Activated CD8-positive, alpha-beta T cell treated with anti-CD3 and anti-CD28 coated beads for 36 hours (primary cell): ENCODE measurements at regions of chr22 and their contacts with region 1.

Region 1: DNA sequence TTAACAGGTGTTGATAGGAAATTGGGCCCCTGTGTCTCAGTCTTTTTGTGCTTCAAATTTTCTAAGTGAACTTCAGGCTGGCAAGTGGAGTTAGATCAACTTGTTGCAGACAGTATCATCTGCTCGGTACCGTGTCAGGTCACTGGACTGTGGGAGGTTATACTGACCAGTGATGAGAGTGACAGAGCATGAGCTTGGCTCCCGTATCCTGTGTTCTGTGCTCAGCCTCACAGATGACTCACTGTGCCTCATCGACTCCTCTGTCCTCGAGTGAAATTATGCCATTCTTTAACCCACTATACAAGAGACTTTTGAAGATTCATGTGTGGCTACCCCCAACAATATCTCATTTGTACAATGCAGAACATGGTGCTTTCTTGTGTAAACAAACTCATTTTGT is 7.9 kb downstream of the GRAP2 start:
- DNase-seq: peak; percentile 66
- ATAC-seq: peak; percentile 55
- H3K4me3 Mint-ChIP-seq: peak overlapping the region; percentile 80
- H3K27ac Mint-ChIP-seq: peak overlapping the region; percentile 92
- H3K4me1 Mint-ChIP-seq: peaks cover 61% of the 10 kb centered on the region
- H3K27me3 Mint-ChIP-seq: no peaks in the 10 kb centered on the region
- CTCF ChIP-seq: no peak

Region 2: GRCh38 chr22:39932918-39933649 is 24.3 kb after region 1 on chr22:
- CTCF ChIA-PET with region 1: interaction called, 130 read pairs
- POLR2A ChIA-PET with region 1: interaction called, 270 read pairs
- intact Hi-C with region 1: no loop called
- DNase-seq: peak; percentile 81
- ATAC-seq: peak; percentile 67
- H3K4me3 Mint-ChIP-seq: peak overlapping the region; percentile 72
- H3K27ac Mint-ChIP-seq: peak overlapping the region; percentile 90
- H3K4me1 Mint-ChIP-seq: peaks cover 50% of the 10 kb centered on the region
- H3K27me3 Mint-ChIP-seq: no peaks in the 10 kb centered on the region
- CTCF ChIP-seq: peak; percentile 92

Region 3: GRCh38 chr22:40076702-40077645 is 168.2 kb after region 1 on chr22:
- CTCF ChIA-PET with region 1: no interaction called
- POLR2A ChIA-PET with region 1: no interaction called
- intact Hi-C with region 1: no loop called
- DNase-seq: no peak
- ATAC-seq: peak; percentile 57
- H3K4me3 Mint-ChIP-seq: peak overlapping the region; percentile 73
- H3K27ac Mint-ChIP-seq: peak overlapping the region; percentile 88
- H3K4me1 Mint-ChIP-seq: peaks cover 51% of the 10 kb centered on the region
- H3K27me3 Mint-ChIP-seq: no peaks in the 10 kb centered on the region
- CTCF ChIP-seq: no peak